ENCODE measurements at regions of chr1 and their contacts with region 1.

Region 1: GRCh38 chr1:229661022-229661877 is 35.2 kb downstream of the URB2 start:
- DNase-seq: peak; percentile 75 to 82
- ATAC-seq: peak; percentile 86 to 94 (median 91)
- H3K4me3 ChIP-seq: no peak overlapping the region
- H3K27ac ChIP-seq: no peak overlapping the region
- H3K4me1 ChIP-seq: peaks cover 0 to 15% (median 3%) of the 10 kb centered on the region in 9 donors
- H3K27me3 ChIP-seq: no peaks in the 10 kb centered on the region
- CTCF ChIP-seq: peak; percentile 85 to 96 (median 91)

Region 2: DNA sequence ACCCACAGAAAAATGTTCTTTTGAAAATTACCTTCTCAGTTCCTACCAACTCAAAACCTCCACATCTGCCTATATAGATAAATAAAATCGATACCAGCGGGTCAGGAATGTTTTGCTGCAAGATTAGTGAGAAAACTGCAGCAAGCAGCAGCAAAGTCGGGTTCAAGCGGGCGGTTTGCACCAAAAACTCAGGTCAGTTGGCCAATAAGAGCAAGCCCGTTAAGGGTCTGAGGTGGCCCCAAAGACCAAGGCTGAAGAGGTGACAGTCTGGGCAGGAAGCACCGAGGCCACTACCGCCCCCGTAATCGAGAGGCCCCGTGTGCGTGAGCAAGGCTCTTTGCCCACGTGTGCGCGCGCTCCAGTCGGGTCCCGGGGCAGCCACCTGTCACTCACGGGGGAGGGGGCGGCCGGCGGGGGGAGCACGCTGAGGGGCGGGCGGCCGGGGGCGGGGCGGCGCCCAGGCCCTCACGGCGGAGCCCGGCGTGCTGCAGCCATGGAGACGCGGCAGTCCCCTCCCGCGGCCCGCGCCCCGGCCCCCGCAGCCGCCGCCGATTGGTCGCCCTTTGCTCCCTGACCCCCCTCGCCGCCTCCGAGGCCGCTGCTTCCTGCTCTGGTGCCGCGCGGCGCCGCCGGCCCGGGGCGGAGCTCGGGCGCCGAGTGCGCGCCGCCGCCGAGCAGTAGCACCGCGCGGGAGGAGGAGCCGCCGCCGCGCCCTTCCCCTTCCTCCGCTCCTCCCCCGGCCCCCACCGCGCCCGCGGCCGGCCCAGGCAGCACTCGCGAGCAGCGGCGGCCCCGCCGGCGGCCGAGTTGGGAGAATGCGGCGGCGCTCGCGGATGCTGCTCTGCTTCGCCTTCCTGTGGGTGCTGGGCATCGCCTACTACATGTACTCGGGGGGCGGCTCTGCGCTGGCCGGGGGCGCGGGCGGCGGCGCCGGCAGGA is 405.5 kb after region 1 on chr1 and contains the start of gene GALNT2:
- intact Hi-C with region 1: loop called in 2 of 10 experiments (anchors 10 kb)
- DNase-seq: peak; percentile 87 to 90
- ATAC-seq: peak; percentile 92 to 98 (median 95)
- H3K4me3 ChIP-seq: peak within 1 kb of the TSS; percentile 65 to 97 (median 89)
- H3K27ac ChIP-seq: peak within 1 kb of the TSS; percentile 85 to 97 (median 92)
- H3K4me1 ChIP-seq: peaks cover 4 to 46% (median 27%) of the 10 kb centered on the region in 9 donors
- H3K27me3 ChIP-seq: no peaks in the 10 kb centered on the region
- CTCF ChIP-seq: no peak
- total RNA-seq, gene GALNT2: 21.3 to 35.1 (median 25.8) TPM

Region 3: DNA sequence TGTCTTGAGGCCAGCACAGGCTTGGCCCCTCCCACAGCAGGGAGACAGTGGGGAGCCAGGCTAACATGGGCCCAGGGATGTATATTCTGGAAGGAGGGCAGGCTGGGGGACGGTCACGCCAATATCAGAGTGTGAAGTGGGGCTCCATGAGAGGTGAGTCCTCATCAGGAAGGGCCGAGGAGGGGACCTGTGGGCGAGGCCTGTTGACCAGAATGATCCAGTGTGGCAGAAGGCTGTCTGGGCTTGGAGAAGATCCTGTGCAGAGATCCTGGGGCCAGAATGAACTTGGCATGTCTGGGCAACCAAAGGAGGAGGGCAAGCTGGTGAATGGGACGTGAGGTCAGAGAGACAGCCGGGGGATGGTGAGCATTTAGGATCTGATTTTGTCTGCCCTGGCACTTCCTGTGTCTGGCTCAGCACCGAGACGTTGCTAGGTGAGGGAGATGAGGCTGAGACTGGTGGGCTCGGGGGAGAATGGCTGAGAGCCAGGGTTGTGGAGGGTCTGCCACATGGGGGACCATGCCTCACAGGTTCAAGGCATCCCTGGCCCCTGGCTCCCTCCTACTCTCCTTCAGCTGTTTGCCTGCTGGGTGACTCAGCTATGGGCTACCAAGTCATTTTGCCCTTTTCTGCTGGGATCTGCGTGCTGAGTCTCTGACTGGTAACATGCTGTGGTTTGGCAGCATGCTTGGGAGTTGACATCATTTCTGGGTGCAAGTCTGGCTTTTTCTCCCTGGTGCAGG is 423.1 kb after region 1 on chr1:
- intact Hi-C with region 1: loop called in 1 of 10 experiments (anchors 10 kb)
- DNase-seq: peak in 1 of 2 donors; percentile 31
- ATAC-seq: peak in 5 of 8 donors; percentile 9 to 80 (median 31)
- H3K4me3 ChIP-seq: no peak overlapping the region
- H3K27ac ChIP-seq: peak overlapping the region in 4 of 10 donors; percentile 21 to 74 (median 38)
- H3K4me1 ChIP-seq: peaks cover 11 to 68% (median 51%) of the 10 kb centered on the region in 9 donors
- H3K27me3 ChIP-seq: no peaks in the 10 kb centered on the region
- CTCF ChIP-seq: no peak

Region 4: GRCh38 chr1:230176871-230177411 is 515.7 kb after region 1 on chr1:
- intact Hi-C with region 1: loop called in 1 of 10 experiments (anchors 10 kb)
- DNase-seq: peak; percentile 72 to 86
- ATAC-seq: peak; percentile 88 to 97 (median 95)
- H3K4me3 ChIP-seq: peak overlapping the region in 9 of 10 donors; percentile 4 to 45 (median 24)
- H3K27ac ChIP-seq: peak overlapping the region in 9 of 10 donors; percentile 44 to 75 (median 60)
- H3K4me1 ChIP-seq: peaks cover 0 to 47% (median 27%) of the 10 kb centered on the region in 9 donors
- H3K27me3 ChIP-seq: no peaks in the 10 kb centered on the region
- CTCF ChIP-seq: no peak

Region 5: GRCh38 chr1:230268366-230269170 is 607.3 kb after region 1 on chr1:
- intact Hi-C with region 1: loop called in 1 of 10 experiments (anchors 2 kb)
- DNase-seq: peak in 1 of 2 donors; percentile 57
- ATAC-seq: peak; percentile 56 to 74 (median 70)
- H3K4me3 ChIP-seq: no peak overlapping the region
- H3K27ac ChIP-seq: peak overlapping the region in 1 of 10 donors; percentile 44
- H3K4me1 ChIP-seq: peaks cover 8 to 34% (median 20%) of the 10 kb centered on the region in 9 donors
- H3K27me3 ChIP-seq: no peaks in the 10 kb centered on the region
- CTCF ChIP-seq: peak; percentile 45 to 75 (median 64)

Region 6: GRCh38 chr1:230310381-230311163 is 649.3 kb after region 1 on chr1:
- intact Hi-C with region 1: loop called (anchors 1 to 10 kb)
- DNase-seq: peak; percentile 72 to 74
- ATAC-seq: peak; percentile 82 to 94 (median 89)
- H3K4me3 ChIP-seq: no peak overlapping the region
- H3K27ac ChIP-seq: no peak overlapping the region
- H3K4me1 ChIP-seq: peaks cover 0 to 19% (median 8%) of the 10 kb centered on the region in 9 donors
- H3K27me3 ChIP-seq: peaks cover 0 to 18% (median 0%) of the 10 kb centered on the region in 7 donors
- CTCF ChIP-seq: peak; percentile 87 to 97 (median 95)

Region 7: GRCh38 chr1:230476622-230477003 is 815.4 kb after region 1 on chr1:
- intact Hi-C with region 1: loop called in 1 of 10 experiments (anchors 5 kb)
- DNase-seq: no peak
- ATAC-seq: no peak
- H3K4me3 ChIP-seq: no peak overlapping the region
- H3K27ac ChIP-seq: no peak overlapping the region
- H3K4me1 ChIP-seq: no peaks in the 10 kb centered on the region
- H3K27me3 ChIP-seq: peaks cover 0 to 22% (median 10%) of the 10 kb centered on the region in 7 donors
- CTCF ChIP-seq: no peak